Heart left ventricle (tissue), 16 donors: ENCODE measurements at regions of chr17 and their contacts with region 1.

Region 1: DNA sequence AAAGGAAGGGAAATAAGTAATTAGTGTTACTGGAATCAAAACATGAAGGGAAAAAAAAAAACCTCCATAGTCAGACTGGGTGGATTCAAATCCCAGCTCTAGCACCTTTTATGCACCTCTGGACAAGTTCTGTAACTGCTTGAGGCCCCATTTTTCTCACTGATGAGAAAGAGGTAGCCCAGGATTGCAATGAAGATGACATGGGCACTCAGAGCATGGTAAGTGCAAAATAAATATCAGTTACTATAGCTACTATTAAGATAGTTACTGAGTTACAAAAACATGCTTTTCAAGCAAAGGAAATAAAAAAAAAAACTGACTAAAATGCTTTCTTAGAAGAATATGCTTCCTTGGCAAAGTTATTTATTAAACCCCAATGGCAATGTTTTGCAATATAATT is 58.8 kb downstream of the CEP95 start:
- DNase-seq: no peak
- ATAC-seq: no peak
- H3K4me3 ChIP-seq: no peak overlapping the region
- H3K27ac ChIP-seq: no peak overlapping the region
- H3K4me1 ChIP-seq: peaks cover 0 to 8% (median 0%) of the 10 kb centered on the region in 12 donors
- H3K27me3 ChIP-seq: no peaks in the 10 kb centered on the region
- CTCF ChIP-seq: no peak
- POLR2A ChIP-seq: no peak

Region 2: DNA sequence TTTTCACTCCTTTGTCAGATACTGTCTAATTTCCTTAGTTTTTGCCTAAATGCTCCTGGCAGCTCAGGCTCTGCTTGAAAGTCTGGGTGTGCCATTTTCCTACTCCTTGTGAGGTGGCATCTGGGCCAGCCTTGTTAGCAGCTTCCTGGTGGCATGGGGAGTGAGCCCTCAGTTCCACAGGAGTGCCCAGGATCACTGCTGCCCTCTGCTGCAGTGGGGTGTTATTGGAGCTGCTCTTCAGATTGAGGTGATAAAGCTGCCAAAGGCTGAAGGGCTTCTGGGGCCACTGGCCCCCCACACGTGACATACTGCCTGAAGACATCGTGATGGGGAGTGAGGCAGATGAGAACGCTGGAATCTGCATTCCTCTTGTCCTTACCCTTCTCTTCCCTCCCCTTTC is 31.4 kb before region 1 on chr17:
- intact Hi-C with region 1: loop called in 1 of 10 experiments (anchors 2 kb)
- DNase-seq: no peak
- ATAC-seq: no peak
- H3K4me3 ChIP-seq: no peak overlapping the region
- H3K27ac ChIP-seq: no peak overlapping the region
- H3K4me1 ChIP-seq: peaks cover 0 to 7% (median 0%) of the 10 kb centered on the region in 12 donors
- H3K27me3 ChIP-seq: no peaks in the 10 kb centered on the region
- CTCF ChIP-seq: no peak
- POLR2A ChIP-seq: no peak

Region 3: DNA sequence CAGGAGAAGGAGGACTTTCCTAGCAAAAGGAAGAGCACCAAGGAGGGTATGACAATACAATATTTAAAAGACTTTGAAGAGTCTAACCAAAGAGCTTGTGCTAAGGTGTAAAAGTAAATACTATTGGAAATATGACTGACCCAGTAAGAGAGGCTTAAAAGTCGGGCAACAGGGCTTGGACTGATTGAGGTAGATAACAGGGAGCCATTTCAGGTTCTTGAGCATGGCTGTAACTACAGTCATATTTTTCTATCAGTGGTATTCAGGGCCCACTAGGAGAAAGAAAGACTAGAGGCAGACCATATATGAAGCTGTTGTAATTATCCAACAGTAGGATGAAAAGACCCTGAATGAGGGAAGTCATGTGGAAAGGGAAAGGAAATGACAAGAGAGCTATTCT is 34.3 kb after region 1 on chr17:
- intact Hi-C with region 1: loop called in 1 of 10 experiments (anchors 5 kb)
- DNase-seq: no peak
- ATAC-seq: no peak
- H3K4me3 ChIP-seq: no peak overlapping the region
- H3K27ac ChIP-seq: no peak overlapping the region
- H3K4me1 ChIP-seq: peaks cover 0 to 28% (median 7%) of the 10 kb centered on the region in 12 donors
- H3K27me3 ChIP-seq: no peaks in the 10 kb centered on the region
- CTCF ChIP-seq: no peak
- POLR2A ChIP-seq: no peak